ENCODE measurements at regions of chr17 and their contacts with region 1.

Region 1: GRCh38 chr17:6473128-6473767 is 29.0 kb downstream of the PIMREG start:
- DNase-seq: peak; percentile 69 to 90 (median 84)
- H3K4me3 ChIP-seq: no peak overlapping the region
- H3K27ac ChIP-seq: no peak overlapping the region
- H3K27me3 ChIP-seq: no peaks in the 10 kb centered on the region
- CTCF ChIP-seq: peak in 55 of 56 donors; percentile 83 to 99 (median 95)

Region 2: DNA sequence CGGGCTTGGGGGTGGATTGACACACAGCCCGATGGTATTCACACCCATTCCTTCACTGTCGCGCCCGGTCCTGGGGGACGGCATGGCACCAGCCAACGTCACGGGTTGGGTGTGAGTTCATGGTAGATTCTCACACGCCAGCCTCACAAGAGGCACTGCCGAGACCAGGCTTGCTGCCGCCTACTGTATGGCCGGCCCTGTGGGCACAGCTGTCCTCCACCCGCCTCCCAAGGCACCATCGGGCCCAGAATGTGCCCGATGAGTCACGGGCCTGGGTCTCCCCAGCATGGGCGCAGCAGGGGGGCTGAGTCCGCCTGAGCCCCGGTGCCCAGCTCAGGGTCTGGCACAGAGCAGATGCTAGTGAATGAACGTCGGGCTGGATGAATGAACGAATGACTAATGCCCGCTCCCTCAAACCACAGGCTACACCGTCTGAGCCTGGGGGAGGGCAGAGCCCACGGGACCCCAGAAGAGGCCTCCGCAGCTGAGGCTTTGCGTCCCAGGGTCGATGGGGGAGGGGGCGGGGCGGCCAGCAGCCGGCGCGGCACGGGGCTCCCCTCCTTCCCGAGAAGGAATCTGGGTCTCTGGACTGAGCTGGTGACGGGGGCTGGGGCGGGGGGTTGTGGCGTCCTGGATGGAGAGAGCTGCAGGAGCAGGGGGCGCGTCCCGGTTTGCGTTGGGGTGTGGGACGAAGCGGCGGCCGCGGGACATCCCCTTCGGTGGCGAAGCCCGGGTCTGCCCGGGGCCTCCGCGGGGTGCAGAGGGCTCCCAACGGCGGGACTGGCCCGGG is 82.3 kb after region 1 on chr17:
- intact Hi-C with region 1: loop called in 1 of 2 experiments (anchors 10 kb)
- DNase-seq: peak in 6 of 10 donors; percentile 52 to 67 (median 64)
- H3K4me3 ChIP-seq: peak overlapping the region; percentile 20 to 79 (median 64)
- H3K27ac ChIP-seq: peak overlapping the region in 52 of 59 donors; percentile 22 to 87 (median 74)
- H3K27me3 ChIP-seq: peaks cover 0 to 18% (median 0%) of the 10 kb centered on the region in 45 donors
- CTCF ChIP-seq: no peak

Region 3: DNA sequence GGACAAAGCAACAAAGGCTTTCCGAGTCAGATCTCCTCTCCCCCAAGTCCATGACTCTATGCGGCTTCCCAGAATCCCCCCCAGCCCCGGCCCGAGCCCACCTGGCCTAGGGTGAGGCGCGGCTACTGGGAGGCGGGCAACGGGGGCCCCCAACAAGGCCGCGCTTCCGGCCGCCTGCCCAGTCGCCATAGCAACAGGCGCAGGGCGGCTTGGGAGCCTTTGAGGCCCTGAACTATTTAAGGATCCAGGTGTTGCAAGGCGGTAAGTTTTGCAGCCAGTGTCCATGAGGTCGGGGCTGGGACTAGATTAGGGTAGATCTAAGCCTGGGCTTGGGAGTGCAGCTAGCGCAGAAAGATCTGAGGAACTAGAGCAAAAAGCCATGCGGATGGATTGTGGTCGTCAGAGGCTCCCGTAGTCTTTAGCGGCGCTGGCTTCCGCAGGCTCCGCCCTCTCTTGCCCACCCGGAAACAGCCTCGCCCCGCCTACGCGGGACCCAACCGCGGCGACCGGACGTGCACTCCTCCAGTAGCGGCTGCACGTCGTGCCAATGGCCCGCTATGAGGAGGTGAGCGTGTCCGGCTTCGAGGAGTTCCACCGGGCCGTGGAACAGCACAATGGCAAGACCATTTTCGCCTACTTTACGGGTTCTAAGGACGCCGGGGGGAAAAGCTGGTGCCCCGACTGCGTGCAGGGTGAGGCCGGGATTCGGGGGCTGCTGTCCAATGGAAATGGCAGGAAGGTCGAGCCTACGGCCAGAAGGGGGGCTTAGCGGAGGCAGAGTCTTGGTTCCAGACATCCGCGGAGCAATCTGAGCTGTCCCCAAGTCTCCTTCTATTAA is 167.5 kb after region 1 on chr17 and contains the starts of genes KIAA0753 and TXNDC17:
- intact Hi-C with region 1: loop called (anchors 5 to 10 kb)
- DNase-seq: peak; percentile 79 to 95 (median 88)
- H3K4me3 ChIP-seq: peak within 1 kb of the TSS; percentile 71 to 100 (median 92)
- H3K27ac ChIP-seq: peak within 1 kb of the TSS; percentile 76 to 99 (median 93)
- H3K27me3 ChIP-seq: no peaks in the 10 kb centered on the region
- CTCF ChIP-seq: peak in 16 of 56 donors; percentile 7 to 49 (median 26)
- total RNA-seq, gene KIAA0753: 18.3 to 60.7 (median 38.5) TPM
- total RNA-seq, gene TXNDC17: 12.2 to 33.5 (median 20.5) TPM

Measured in dorsolateral prefrontal cortex (tissue), 120 donors.